ENCODE measurements at regions of chr12 and their contacts with region 1.

Region 1: DNA sequence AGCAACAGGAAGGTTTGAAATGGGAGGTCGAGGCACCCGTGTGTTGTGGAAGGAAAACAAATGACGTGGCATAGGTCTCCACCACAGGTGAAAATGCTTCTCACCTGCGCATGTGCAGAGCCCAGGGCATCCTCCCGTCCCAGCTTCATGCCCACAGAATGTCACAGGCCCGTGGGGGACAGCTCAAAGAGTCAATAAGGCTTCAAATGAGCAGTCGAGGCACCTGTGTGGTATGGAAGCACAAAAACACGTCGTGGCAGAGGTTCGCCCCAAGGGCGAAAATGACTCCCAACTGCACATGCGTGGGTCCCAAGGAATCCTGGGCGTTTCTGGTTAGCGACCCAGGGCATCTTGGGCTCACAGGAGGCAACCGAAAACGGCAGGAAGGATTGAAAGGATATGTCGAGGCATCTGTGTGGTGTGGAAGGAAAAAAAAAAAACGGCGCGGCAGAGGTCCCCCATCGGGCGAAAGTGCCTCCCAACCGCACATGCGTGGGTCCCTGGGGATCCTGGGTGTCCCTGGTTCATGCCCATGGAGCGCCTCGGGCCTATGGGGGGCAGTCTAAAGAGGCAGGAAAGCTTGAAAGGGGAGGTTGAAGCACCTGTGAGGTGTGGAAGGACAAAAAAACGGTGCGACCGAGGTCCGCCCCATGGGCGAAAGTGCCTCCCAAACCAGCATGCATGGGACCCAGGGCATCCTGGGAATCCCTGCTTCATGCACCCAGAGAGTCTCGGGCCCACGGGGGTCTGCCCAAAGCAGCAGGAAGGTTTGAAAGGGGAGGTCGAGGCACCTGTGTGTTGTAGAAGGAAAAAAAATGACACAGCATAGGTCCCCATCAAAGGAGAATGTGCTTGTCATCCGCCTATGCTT is 578.5 kb downstream of the ALG10 start:
- DNase-seq: peak in 2 of 4 experiments; percentile 1
- ATAC-seq: no peak
- H3K4me3 ChIP-seq: no peak overlapping the region
- H3K27ac ChIP-seq: no peak overlapping the region
- H3K4me1 ChIP-seq: no peaks in the 10 kb centered on the region
- H3K27me3 ChIP-seq: no peaks in the 10 kb centered on the region
- CTCF ChIP-seq: no peak
- EP300 ChIP-seq: no peak
- POLR2A ChIP-seq: no peak
- RAD21 ChIP-seq: no peak

Region 2: DNA sequence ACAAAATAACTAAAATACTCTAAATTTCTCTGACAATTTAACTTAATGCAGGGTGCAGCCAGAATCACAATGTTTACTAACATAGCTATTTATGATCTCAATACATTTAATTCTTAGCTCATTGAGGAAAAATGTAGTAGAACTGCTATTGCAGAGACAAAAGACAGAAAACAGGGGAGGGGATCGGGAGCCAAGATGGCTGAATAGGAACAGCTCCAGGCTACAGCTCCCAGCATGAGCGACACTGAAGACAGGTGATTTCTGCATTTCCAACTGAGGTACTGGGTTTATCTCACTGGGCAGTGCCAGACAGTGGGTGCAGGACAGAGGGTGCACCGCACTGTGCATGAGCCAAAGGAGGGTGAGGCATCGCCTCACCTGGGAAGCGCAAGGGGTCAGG is 467.7 kb before region 1 on chr12:
- CTCF ChIA-PET with region 1: no interaction called
- POLR2A ChIA-PET with region 1: no interaction called
- in situ Hi-C with region 1: loop called (anchors 10 kb)
- intact Hi-C with region 1: no loop called
- DNase-seq: no peak
- ATAC-seq: no peak
- H3K4me3 ChIP-seq: no peak overlapping the region
- H3K27ac ChIP-seq: no peak overlapping the region
- H3K4me1 ChIP-seq: peaks cover 0 to under 1% of the 10 kb centered on the region in 2 experiments; a peak in 2 of 5 replicates
- H3K27me3 ChIP-seq: no peaks in the 10 kb centered on the region
- CTCF ChIP-seq: no peak
- EP300 ChIP-seq: no peak
- POLR2A ChIP-seq: no peak
- RAD21 ChIP-seq: no peak

Region 3: DNA sequence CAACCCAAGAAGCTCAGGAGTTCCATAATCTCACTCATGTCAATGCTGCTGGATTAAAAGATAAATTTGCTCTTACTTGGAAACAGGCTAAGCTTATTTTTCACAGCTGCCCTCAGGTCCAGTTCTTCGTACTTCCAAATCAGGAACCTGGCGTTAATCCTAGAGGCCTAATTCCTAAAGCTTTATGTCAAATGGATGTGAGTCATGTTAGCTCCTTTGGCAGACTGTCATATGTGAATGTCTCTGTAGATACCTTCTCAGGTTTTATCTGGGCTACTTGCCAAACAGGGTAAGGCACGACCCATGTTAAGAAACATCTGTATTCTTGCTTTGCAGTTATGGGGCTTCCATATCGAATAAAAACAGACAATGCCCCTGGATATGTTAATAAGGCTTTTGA is 73.9 kb before region 1 on chr12:
- CTCF ChIA-PET with region 1: no interaction called
- POLR2A ChIA-PET with region 1: no interaction called
- in situ Hi-C with region 1: no loop called
- intact Hi-C with region 1: no loop called
- DNase-seq: no peak
- ATAC-seq: no peak
- H3K4me3 ChIP-seq: no peak overlapping the region
- H3K27ac ChIP-seq: no peak overlapping the region
- H3K4me1 ChIP-seq: no peaks in the 10 kb centered on the region
- H3K27me3 ChIP-seq: no peaks in the 10 kb centered on the region
- CTCF ChIP-seq: no peak
- EP300 ChIP-seq: no peak
- POLR2A ChIP-seq: no peak
- RAD21 ChIP-seq: no peak